HEK293 (cell line): ENCODE measurements at regions of chr12 and their contacts with region 1.

Region 1: GRCh38 chr12:63420206-63420644 is 248.1 kb downstream of the DPY19L2 start:
- H3K4me3 ChIP-seq: no peak overlapping the region
- H3K27ac ChIP-seq: no peak overlapping the region
- H3K4me1 ChIP-seq: no peaks in the 10 kb centered on the region
- CTCF ChIP-seq: peak; percentile 32; the same call in 1 of the 2 replicates

Region 2: DNA sequence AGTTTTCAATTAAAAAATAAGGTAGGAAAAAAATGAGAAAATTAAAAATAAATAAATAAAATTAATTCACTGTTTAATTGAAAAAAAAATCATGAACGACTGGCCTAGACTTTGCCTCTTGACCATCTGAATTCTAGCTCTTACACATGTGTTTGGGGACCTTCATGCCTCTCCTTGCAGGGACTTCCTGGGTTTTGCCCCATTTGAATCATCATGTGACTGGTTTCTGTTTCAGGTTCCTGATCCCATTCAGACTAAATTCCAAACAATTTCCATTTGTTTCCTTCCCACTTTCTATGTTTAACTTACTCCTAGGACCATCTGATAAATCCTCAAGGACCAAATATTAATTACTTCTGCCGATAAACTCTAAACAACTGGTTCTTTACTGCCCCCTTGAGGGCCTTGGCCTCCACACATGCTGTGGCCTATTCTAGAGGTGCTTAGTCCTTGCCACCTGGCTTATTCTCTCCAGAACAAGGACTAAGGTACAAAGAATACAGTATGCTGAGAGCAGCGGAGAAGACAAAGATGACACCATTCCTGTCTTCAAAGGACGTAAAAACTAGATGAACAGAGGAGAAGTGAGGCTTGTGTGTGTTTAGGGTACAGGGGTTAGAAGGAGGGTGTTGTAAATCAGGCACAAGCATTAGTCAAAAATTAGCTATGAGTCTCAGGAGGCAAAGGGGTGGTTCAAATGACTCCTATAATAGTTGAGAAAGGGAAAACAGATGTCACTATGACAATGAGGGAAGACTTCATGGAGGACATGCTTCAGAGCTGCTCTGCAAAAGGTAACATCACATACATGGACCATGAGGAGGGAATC is 143.5 kb before region 1 on chr12:
- CTCF ChIA-PET with region 1: no interaction called
- POLR2A ChIA-PET with region 1: no interaction called
- H3K4me3 ChIP-seq: no peak overlapping the region
- H3K27ac ChIP-seq: no peak overlapping the region
- H3K4me1 ChIP-seq: no peaks in the 10 kb centered on the region
- CTCF ChIP-seq: 0 out of 2 replicates have a peak, but pooled peaks have one; percentile 17

Region 3: GRCh38 chr12:63394349-63394748 is 25.9 kb before region 1 on chr12:
- CTCF ChIA-PET with region 1: no interaction called
- POLR2A ChIA-PET with region 1: no interaction called
- H3K4me3 ChIP-seq: no peak overlapping the region
- H3K27ac ChIP-seq: no peak overlapping the region
- H3K4me1 ChIP-seq: no peaks in the 10 kb centered on the region
- CTCF ChIP-seq: no peak

Region 4: GRCh38 chr12:63410197-63410596 is 10.0 kb before region 1 on chr12:
- CTCF ChIA-PET with region 1: interaction called, 14 read pairs
- POLR2A ChIA-PET with region 1: no interaction called
- H3K4me3 ChIP-seq: no peak overlapping the region
- H3K27ac ChIP-seq: no peak overlapping the region
- H3K4me1 ChIP-seq: no peaks in the 10 kb centered on the region
- CTCF ChIP-seq: no peak

Region 5: GRCh38 chr12:63766498-63766897 is 346.3 kb after region 1 on chr12:
- CTCF ChIA-PET with region 1: interaction called, 12 read pairs
- POLR2A ChIA-PET with region 1: no interaction called
- H3K4me3 ChIP-seq: no peak overlapping the region
- H3K27ac ChIP-seq: no peak overlapping the region
- H3K4me1 ChIP-seq: no peaks in the 10 kb centered on the region
- CTCF ChIP-seq: no peak

Region 6: DNA sequence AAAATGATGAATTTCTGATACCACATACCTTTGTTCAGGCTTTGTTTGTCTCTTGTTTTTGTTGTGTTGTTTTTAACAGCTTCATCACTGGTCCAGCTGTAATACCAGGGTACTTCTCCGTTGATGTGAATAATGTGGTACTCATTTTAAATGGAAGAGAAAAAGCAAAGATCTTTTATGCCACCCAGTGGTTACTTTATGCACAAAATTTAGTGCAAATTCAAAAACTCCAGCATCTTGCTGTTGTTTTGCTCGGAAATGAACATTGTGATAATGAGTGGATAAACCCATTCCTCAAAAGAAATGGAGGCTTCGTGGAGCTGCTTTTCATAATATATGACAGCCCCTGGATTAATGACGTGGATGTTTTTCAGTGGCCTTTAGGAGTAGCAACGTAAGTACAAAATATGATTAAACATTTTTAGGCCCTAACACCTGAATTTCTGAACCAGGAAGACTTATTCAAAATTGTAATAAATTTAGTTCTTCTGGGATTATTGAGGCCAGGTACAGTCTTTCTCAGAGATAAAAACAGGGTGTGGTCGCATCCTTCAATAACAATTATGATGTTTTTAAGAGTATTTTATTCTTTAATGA is 381.9 kb after region 1 on chr12:
- CTCF ChIA-PET with region 1: interaction called, 11 read pairs
- POLR2A ChIA-PET with region 1: no interaction called
- H3K4me3 ChIP-seq: no peak overlapping the region
- H3K27ac ChIP-seq: no peak overlapping the region
- H3K4me1 ChIP-seq: no peaks in the 10 kb centered on the region
- CTCF ChIP-seq: 0 out of 2 replicates have a peak, but pooled peaks have one; percentile 28